ENCODE measurements at regions of chr19 and their contacts with region 1.

Region 1: GRCh38 chr19:38647368-38647965 is at the start of gene ACTN4:
- DNase-seq: peak; percentile 100
- ATAC-seq: peak; percentile 93
- total RNA-seq, gene ACTN4: 145 TPM

Region 2: GRCh38 chr19:38583219-38583984 is 64.1 kb before region 1 on chr19:
- intact Hi-C with region 1: no loop called
- DNase-seq: peak; percentile 48
- ATAC-seq: no peak

Region 3: DNA sequence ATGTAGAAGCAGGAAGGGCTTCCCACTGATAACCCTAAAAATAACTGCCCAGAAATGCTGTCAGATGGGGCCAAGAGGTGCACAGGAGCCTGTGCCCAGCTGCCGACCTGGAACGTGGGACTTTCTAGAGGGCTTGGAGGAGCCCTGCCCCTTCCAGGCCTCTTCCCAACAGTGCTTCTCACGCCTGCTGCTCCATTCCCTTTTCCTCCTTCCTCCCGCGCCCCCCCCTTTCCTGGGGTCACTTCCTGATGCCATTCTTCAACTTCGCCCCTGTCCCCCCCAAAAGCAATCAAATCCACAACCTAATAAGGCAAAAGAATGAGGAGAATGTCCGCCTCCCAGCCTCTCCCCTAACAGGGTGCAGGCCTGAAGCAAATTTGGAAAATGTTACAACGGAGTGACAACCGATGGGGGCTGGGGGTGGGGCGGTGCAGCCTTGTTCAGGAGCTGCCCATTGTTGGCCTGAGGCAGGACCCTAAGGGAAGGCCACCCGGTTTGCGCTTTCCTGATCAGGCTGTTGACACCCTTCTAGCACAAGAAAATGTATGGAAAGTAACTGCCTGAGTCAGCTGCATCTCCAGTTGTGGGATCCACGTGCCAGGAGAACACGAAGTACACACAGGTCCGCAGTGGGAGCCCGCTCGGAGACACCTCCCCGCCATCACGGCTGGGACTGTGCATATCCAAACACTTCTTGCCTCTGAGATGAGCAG is 18.6 kb after region 1 on chr19:
- intact Hi-C with region 1: loop called (anchors 2 kb)
- DNase-seq: no peak
- ATAC-seq: peak; percentile 59

Region 4: GRCh38 chr19:38683393-38684080 is 36.1 kb after region 1 on chr19:
- intact Hi-C with region 1: no loop called
- DNase-seq: peak; percentile 77
- ATAC-seq: peak; percentile 58

Region 5: DNA sequence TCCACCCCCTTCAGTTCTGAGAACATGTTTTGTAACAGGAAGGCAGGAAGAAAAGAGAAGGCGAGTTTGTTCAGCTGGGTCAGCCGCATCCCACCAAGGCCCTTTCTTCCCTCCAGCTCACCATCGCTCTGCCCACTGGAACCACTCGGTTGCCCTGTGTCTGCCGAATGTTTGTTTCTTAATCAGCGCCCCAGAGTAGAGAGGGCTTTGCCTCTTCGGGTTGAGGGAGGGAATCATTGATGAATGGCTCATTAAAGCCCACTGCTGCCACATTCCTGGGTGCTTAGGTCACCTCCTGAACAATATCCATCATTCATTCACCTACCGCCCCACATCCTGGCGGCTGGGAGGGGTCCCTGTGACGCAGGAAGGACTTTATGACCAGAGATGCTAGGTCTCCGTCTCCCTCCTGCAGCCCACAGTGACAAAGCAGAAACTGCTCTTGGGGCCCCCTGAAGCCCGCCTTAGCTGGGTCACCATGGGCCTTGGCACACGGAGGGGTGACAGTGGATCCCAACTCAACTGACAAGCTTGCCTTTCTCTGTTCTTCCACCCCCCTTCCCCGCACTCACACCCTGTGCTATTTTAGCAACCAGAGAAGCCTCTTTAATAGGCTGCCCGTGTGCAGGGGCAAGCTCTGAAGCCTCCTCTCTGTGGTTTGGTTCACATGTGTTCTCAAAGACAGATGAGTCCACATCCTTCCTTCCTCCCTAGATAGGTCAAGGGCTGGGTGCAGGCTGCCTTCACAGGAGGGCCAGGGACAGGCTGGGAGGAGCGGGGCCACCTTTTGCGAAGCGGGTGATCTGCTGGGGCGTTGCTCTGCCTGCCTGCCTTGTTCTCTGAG is 46.1 kb after region 1 on chr19:
- intact Hi-C with region 1: no loop called
- DNase-seq: peak; percentile 70
- ATAC-seq: peak; percentile 6

Region 6: GRCh38 chr19:38711726-38712153 is 64.3 kb after region 1 on chr19:
- intact Hi-C with region 1: loop called (anchors 5 kb)
- DNase-seq: no peak
- ATAC-seq: peak; percentile 19

Region 7: GRCh38 chr19:38831142-38831605 is 183.7 kb after region 1 on chr19:
- intact Hi-C with region 1: loop called (anchors 2 kb)
- DNase-seq: peak; percentile 86
- ATAC-seq: peak; percentile 67

Region 8: GRCh38 chr19:38849860-38850435 is 202.5 kb after region 1 on chr19 and contains the start of gene HNRNPL:
- intact Hi-C with region 1: loop called (anchors 5 kb)
- DNase-seq: peak; percentile 99
- ATAC-seq: peak; percentile 81
- total RNA-seq, gene HNRNPL: 184 TPM